ENCODE measurements at regions of chr11 and their contacts with region 1.

Region 1: DNA sequence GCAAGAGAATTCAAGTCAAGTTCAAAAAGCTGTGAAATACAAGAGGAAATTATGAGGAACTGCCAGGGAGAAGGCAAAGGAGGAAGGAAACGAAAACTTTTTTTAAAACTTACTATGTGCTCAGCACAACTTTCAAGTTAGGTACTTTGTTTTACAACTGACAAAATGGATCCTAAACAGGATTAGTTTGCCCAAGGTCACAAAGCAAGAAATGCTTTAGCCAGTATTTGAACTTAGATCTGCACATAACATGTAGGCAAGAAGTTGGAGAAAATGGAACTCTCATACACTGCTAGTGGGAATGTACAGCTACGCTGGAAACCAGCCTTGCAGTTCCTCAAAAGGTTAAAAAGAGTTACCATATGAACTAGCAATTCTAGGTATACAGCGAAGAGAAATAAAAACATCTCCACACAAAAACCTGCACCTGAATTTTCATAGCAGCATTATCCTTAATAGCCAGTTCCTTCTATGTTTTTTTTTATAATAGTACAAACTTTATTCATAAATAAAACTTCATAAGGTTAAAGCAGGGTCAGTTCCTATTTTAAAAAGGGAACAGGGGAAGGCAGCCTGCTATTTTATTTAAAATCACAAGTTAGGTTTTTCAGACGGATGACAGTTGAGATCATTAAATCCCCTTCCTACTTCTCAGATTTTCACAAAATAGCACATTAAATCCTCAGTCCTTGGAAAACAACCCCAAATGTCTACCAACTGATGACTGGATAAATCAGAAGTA is 19.2 kb downstream of the DDX6 start:
- DNase-seq: no peak
- H3K4me3 ChIP-seq: no peak overlapping the region
- H3K27ac ChIP-seq: no peak overlapping the region
- H3K4me1 ChIP-seq: no peaks in the 10 kb centered on the region
- H3K27me3 ChIP-seq: no peaks in the 10 kb centered on the region
- CTCF ChIP-seq: no peak

Region 2: GRCh38 chr11:118672846-118673245 is 98.9 kb before region 1 on chr11:
- CTCF ChIA-PET with region 1: no interaction called
- dilution Hi-C with region 1: no loop called
- in situ Hi-C with region 1: no loop called
- intact Hi-C with region 1: no loop called
- DNase-seq: no peak
- H3K4me3 ChIP-seq: no peak overlapping the region
- H3K27ac ChIP-seq: no peak overlapping the region
- H3K4me1 ChIP-seq: no peaks in the 10 kb centered on the region
- H3K27me3 ChIP-seq: no peaks in the 10 kb centered on the region
- CTCF ChIP-seq: no peak

Region 3: DNA sequence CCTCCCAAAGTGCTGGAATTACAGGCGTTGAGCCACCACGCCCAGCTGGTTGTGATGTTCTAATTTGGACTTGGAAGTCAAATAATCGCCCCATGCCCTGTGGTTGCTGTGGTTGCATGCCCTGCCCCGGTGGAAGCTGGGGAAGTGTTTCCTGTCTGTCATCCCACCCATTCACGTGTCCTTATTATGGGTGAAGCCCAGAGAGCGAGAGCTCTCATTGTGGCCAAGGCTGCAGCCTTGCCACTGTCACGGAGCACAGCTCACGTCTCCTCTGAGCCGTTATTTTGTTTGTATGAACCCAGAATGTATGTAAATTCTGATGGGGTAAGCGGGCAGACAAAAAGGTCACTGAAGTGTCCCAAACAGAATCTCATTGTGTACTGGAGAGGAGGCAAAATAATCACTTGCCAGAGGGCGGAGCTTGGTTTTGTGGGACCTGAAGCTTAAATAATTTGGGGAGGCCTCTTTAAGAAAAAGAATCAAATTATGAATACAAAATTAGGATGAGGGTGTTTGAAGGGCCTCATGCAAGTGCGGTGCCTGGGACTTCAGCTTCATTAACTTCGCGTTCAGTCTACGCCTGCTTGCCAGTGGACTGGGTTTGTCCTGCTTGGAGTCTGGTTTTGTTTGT is 66.5 kb before region 1 on chr11:
- CTCF ChIA-PET with region 1: no interaction called
- dilution Hi-C with region 1: loop called (anchors 5 kb)
- in situ Hi-C with region 1: no loop called
- intact Hi-C with region 1: no loop called
- DNase-seq: no peak
- H3K4me3 ChIP-seq: no peak overlapping the region
- H3K27ac ChIP-seq: no peak overlapping the region
- H3K4me1 ChIP-seq: no peaks in the 10 kb centered on the region
- H3K27me3 ChIP-seq: no peaks in the 10 kb centered on the region
- CTCF ChIP-seq: no peak

Region 4: DNA sequence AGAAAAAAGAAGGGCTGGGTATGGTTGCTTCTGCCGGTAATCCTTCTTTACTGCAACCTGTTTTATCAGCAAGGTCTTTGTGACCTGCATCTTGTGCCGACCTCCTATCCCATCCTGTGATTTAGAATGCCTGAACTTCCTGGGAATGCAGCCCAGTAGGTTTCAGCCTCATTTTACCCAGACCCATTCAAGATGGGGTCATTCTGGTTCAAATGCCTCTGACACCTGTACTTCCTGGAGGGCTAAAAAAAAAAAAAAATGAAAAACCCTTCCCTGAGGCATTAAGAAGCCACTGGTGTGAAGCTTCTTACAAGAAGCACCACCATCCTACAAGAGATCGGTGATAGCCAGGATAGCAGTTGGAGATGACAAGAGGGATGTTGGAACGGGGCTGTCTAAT is 37.7 kb before region 1 on chr11:
- CTCF ChIA-PET with region 1: no interaction called
- dilution Hi-C with region 1: loop called (anchors 5 kb)
- in situ Hi-C with region 1: no loop called
- intact Hi-C with region 1: no loop called
- DNase-seq: no peak
- H3K4me3 ChIP-seq: no peak overlapping the region
- H3K27ac ChIP-seq: no peak overlapping the region
- H3K4me1 ChIP-seq: no peaks in the 10 kb centered on the region
- H3K27me3 ChIP-seq: no peaks in the 10 kb centered on the region
- CTCF ChIP-seq: no peak

Region 5: DNA sequence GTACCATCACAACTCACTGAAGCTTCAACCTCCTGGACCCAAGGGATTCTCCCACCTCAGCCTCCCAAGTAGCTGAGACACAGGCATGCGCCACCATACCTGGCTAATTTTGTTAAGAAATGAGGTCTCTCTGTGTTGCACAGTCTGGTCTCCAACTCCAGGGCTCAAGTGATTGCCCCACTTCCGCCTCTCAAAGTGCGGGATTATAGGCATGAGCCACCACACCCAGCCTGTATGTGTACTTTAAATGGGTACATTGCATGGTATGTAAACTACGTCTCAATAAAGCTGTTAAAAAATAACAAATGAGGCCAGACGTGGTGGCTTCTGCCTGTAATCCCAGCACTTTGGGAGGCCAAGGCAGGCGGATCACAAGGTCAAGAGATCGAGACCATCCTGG is 55.4 kb after region 1 on chr11:
- CTCF ChIA-PET with region 1: no interaction called
- dilution Hi-C with region 1: no loop called
- in situ Hi-C with region 1: no loop called
- intact Hi-C with region 1: no loop called
- DNase-seq: no peak
- H3K4me3 ChIP-seq: no peak overlapping the region
- H3K27ac ChIP-seq: no peak overlapping the region
- H3K4me1 ChIP-seq: no peaks in the 10 kb centered on the region
- H3K27me3 ChIP-seq: no peaks in the 10 kb centered on the region
- CTCF ChIP-seq: no peak

Region 6: DNA sequence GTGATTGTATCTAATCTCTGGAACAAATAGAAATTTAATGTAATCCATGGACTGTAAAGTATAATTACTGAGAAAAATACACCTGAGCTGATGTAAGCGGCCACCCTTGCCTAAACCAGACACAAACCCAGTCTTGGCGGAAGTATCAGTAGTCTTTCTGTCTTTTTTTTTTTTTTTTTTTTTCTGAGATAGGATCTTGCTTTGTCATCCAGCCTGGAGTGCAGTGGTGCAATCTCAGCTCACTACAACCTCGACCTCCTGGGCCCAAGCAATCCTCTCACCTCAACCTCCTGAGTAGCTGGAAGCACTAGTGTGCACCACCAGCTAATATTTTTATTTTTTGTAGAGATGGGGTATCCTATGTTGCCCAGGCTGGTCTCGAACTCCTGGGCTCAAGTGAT is 106.4 kb after region 1 on chr11:
- CTCF ChIA-PET with region 1: no interaction called
- dilution Hi-C with region 1: loop called (anchors 5 kb)
- in situ Hi-C with region 1: no loop called
- intact Hi-C with region 1: no loop called
- DNase-seq: no peak
- H3K4me3 ChIP-seq: no peak overlapping the region
- H3K27ac ChIP-seq: no peak overlapping the region
- H3K4me1 ChIP-seq: peaks cover 13% of the 10 kb centered on the region
- H3K27me3 ChIP-seq: no peaks in the 10 kb centered on the region
- CTCF ChIP-seq: no peak